AG04450 (cell line): ENCODE measurements at regions of chr20 and their contacts with region 1.

Region 1: DNA sequence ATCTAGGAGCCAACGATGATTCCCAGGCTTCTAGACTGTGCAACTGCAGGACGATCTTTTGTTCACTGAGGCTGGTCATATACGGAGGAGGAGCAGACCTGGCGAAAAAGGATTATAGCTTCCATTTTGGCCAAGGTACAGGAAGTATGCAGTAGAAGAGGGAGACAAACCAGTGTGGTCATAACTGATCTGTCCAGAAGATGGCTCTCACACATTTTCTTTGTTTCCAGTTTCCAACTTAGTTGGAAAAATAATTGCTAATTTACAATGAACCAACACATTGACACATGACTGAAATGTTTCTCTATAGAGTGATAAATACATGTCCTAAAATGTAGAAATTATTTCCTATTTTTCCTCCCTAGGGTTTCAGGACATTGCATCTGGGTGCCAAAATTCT is 364.1 kb upstream of the BTBD3 start:
- DNase-seq: no peak
- H3K4me3 ChIP-seq: no peak overlapping the region
- H3K27ac ChIP-seq: no peak overlapping the region
- H3K27me3 ChIP-seq: no peaks in the 10 kb centered on the region
- CTCF ChIP-seq: peak; percentile 54

Region 2: DNA sequence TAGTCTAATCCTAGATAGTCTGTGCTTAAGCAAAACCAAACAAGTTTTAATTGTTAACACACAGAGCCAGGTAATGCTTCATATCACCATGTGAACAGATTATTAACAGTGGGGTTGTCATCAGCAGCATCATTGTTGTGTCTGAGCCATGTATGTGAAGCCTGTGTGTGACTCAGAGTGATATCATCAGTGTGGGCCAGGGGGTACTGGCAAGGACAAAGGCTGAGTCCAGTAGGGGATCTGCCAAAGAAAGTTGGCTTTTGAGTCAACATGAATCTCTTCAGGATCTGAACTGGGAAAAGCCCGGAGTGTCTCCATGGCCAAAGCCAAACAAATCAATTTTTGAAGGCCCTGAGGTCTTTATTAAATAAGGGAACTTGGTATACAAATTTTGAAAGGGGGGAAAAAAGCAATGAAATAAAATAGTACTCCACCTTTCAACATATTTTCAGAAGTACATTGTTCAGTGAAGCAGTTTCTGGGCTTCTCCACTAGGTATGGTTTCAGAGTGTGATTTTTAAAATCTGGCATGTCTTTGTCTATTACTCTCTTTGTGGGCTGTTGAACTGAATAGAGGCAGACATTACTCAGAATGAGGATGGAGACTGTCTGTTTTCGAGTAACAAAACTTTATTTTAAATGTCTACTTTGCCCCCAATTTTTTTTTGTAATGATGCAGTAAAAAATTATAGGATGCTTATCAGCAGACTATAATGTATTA is 435.6 kb before region 1 on chr20:
- CTCF ChIA-PET with region 1: no interaction called
- POLR2A ChIA-PET with region 1: no interaction called
- DNase-seq: no peak
- H3K4me3 ChIP-seq: no peak overlapping the region
- H3K27ac ChIP-seq: no peak overlapping the region
- H3K27me3 ChIP-seq: no peaks in the 10 kb centered on the region
- CTCF ChIP-seq: no peak

Region 3: DNA sequence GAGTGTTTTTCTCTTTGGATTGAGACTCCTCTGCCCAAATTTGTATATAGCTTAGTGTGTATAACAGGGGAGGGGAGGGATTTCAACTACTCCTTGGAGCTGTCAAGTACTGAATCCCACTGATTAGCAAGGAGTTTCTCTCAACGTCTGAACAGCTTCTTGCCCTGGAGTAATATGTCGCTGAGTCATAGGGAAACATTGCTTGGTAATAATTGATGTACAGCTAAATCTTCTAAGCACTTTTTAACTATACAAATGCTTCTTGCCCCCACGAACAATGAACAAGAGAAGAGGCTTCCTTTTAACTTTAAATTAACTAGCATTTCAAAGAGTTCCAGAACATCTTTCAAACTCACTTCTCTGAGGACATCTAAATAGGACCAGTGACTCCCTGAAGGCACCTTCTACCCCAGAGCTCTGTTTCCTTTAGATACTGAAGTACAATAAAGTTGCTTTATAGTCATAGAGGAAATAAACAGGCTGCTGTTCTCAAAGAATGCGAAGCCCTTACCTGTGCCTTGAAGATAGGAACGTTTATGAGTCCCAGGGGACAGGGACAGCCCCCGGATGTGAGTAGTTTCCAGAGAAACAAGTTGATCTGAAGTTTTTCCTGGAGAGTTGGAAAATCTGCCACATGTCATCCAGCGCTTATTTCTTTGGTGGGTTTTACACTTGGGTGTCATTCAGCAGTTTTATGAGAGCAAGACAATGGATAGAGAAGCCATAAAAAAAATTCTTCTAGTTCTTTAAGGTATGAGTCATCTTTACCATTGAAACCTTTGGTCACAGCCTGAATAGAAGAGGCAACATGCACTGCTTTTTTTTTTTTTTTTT is 98.4 kb before region 1 on chr20:
- CTCF ChIA-PET with region 1: no interaction called
- POLR2A ChIA-PET with region 1: no interaction called
- DNase-seq: no peak
- H3K4me3 ChIP-seq: no peak overlapping the region
- H3K27ac ChIP-seq: no peak overlapping the region
- H3K27me3 ChIP-seq: no peaks in the 10 kb centered on the region
- CTCF ChIP-seq: no peak

Region 4: DNA sequence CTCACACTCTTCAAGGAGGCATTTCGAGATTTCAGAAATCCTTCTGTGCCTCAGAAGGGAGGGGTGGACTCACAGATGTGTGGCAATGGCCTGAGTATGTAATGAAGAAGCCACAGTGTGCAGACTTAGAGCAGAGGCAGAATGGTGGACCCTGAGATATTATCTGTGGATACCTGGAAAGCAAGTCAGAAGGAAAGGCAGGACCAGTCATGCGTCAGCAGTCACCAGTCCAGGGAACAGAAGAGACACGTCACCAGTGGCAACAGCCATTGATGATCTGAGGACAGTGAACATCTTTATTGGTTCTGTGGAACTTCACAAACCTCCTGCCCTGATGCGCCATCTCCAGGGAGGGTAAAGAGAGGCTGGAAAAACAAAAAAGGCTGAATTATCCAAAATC is 56.1 kb after region 1 on chr20:
- CTCF ChIA-PET with region 1: no interaction called
- POLR2A ChIA-PET with region 1: interaction called, 14 read pairs
- DNase-seq: no peak
- H3K4me3 ChIP-seq: no peak overlapping the region
- H3K27ac ChIP-seq: no peak overlapping the region
- H3K27me3 ChIP-seq: no peaks in the 10 kb centered on the region
- CTCF ChIP-seq: no peak